Activated B cell treated with CpG ODN at 0.5 μM for 24 hours (primary cell): ENCODE measurements at regions of chr17 and their contacts with region 1.

Region 1: DNA sequence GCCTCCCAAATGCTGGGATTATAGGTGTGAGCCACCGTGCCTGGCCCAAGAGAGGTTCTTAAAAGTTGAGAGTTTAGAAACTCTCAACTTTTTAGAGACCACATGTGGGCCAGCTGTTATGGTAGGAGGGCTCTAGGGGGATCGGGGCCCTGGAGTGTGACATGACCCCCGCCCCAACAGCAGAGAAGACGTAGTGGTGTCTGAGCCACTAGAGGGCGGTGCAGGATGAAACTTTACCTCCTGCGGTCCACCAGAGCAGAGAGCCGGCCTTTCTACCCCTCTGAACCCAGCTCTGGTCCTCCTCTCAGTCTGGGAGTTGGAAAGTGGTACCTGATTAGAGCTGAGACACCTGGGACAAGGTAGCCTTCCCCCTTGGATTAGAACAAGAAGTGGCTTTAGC is 7.4 kb downstream of the CDK5RAP3 start:
- DNase-seq: peak; percentile 26
- ATAC-seq: peak; percentile 97
- H3K4me3 Mint-ChIP-seq: no peak overlapping the region
- H3K27ac Mint-ChIP-seq: no peak overlapping the region
- H3K4me1 Mint-ChIP-seq: peaks cover 2% of the 10 kb centered on the region
- H3K27me3 Mint-ChIP-seq: no peaks in the 10 kb centered on the region
- CTCF ChIP-seq: no peak

Region 2: DNA sequence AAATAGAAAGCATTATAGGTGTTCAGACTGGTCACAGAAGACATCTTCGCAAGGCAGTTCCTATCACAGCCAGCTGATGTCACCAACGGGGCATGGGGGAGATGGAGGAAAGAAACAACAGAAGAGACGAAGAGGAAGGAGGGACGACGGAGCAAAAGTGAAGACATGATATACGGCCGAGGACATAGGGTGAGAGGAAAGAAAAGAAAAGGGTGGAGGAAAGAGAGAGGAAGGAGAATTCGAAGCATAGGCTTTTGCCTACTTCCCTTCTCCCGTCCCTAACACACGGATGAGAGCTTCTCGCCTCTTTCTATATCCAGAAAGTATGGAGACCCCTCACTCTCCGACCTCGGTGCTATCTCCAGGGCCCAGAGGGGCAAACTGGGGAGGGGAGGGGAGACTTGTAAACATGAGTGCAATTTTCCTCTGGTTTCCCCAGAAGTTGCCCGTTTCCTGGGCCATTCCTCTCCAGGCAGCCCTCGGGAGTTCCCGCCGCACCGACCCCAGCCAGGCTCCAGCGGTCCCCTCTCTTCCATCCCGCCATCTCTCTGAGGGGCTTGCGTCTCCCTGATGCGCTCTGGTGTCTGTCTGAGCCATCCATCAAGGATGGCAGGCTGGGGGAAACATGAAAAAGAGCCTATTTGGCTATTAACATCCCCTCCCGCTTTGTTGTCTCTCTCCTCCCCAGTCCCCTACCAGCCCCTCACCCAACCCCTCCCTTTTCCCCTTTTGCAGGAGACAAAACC is 33.3 kb after region 1 on chr17:
- CTCF ChIA-PET with region 1: interaction called, 30 read pairs
- POLR2A ChIA-PET with region 1: no interaction called
- intact Hi-C with region 1: no loop called
- DNase-seq: no peak
- ATAC-seq: peak; percentile 69
- H3K4me3 Mint-ChIP-seq: peak overlapping the region; percentile 78
- H3K27ac Mint-ChIP-seq: no peak overlapping the region
- H3K4me1 Mint-ChIP-seq: peaks cover 15% of the 10 kb centered on the region
- H3K27me3 Mint-ChIP-seq: peaks cover 16% of the 10 kb centered on the region
- CTCF ChIP-seq: no peak

Region 3: DNA sequence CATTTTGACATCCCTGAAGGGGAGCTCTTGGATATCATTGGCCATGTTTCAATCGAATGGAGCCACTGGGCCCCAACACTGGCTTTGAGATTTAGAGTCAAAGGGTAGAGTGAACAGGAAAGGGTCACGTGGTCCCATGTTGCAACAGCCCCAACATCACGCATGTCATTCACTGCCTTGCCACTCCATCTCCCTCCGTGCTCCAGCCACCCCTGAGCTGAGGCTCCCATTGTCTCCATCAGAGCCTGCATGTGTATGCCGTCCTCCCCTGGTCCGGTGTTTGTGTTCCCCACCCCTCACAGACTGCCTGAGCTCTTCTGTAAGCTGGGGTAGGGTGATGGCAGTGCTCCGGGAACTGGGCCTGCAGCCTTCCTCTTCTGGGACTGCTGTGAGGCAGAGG is 81.9 kb after region 1 on chr17:
- CTCF ChIA-PET with region 1: no interaction called
- POLR2A ChIA-PET with region 1: no interaction called
- intact Hi-C with region 1: no loop called
- DNase-seq: no peak
- ATAC-seq: no peak
- H3K4me3 Mint-ChIP-seq: no peak overlapping the region
- H3K27ac Mint-ChIP-seq: no peak overlapping the region
- H3K4me1 Mint-ChIP-seq: peaks cover 24% of the 10 kb centered on the region
- H3K27me3 Mint-ChIP-seq: no peaks in the 10 kb centered on the region
- CTCF ChIP-seq: no peak

Region 4: DNA sequence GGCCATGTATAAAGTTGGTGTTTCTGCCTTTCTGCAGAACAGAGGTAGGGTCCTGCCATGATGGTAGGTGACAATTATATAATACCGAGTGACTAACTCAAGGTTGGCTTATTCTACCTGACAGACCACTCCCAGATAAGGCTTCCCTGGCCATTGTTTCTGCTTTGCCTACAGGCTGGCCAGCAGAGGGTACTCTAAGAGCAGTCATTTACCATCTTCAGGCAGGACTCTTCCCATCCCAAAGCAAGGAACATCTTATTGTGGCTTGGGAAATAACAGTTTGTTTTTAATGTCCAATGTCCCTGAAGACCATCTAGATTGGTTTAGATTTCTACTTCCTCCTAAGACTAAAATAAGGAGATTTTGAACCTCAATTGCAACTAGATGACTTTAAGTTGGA is 203.3 kb after region 1 on chr17:
- CTCF ChIA-PET with region 1: no interaction called
- POLR2A ChIA-PET with region 1: no interaction called
- intact Hi-C with region 1: no loop called
- DNase-seq: no peak
- ATAC-seq: no peak
- H3K4me3 Mint-ChIP-seq: no peak overlapping the region
- H3K27ac Mint-ChIP-seq: no peak overlapping the region
- H3K4me1 Mint-ChIP-seq: no peaks in the 10 kb centered on the region
- H3K27me3 Mint-ChIP-seq: no peaks in the 10 kb centered on the region
- CTCF ChIP-seq: no peak